ENCODE measurements at regions of chr15 and their contacts with region 1.

Region 1: GRCh38 chr15:87450314-87450713 is 806.2 kb downstream of the NTRK3 start:
- DNase-seq: no peak
- ATAC-seq: no peak
- H3K4me3 ChIP-seq: no peak overlapping the region
- H3K4me3 Mint-ChIP-seq: no peak overlapping the region
- H3K27ac ChIP-seq: no peak overlapping the region
- H3K27ac Mint-ChIP-seq: no peak overlapping the region
- H3K4me1 ChIP-seq: no peaks in the 10 kb centered on the region
- H3K4me1 Mint-ChIP-seq: no peaks in the 10 kb centered on the region
- H3K27me3 ChIP-seq: no peaks in the 10 kb centered on the region
- H3K27me3 Mint-ChIP-seq: peaks cover 0 to 2% of the 10 kb centered on the region in 2 donors

Region 2: GRCh38 chr15:87547470-87548181 is 97.3 kb after region 1 on chr15:
- CTCF ChIA-PET with region 1: interaction called in 1 of 2 experiments, 10 read pairs
- POLR2A ChIA-PET with region 1: no interaction called
- DNase-seq: no peak
- ATAC-seq: no peak
- H3K4me3 ChIP-seq: no peak overlapping the region
- H3K4me3 Mint-ChIP-seq: no peak overlapping the region
- H3K27ac ChIP-seq: no peak overlapping the region
- H3K27ac Mint-ChIP-seq: no peak overlapping the region
- H3K4me1 ChIP-seq: no peaks in the 10 kb centered on the region
- H3K4me1 Mint-ChIP-seq: no peaks in the 10 kb centered on the region
- H3K27me3 ChIP-seq: no peaks in the 10 kb centered on the region
- H3K27me3 Mint-ChIP-seq: no peaks in the 10 kb centered on the region